HepG2 (cell line): ENCODE measurements at regions of chr10 and their contacts with region 1.

Region 1: DNA sequence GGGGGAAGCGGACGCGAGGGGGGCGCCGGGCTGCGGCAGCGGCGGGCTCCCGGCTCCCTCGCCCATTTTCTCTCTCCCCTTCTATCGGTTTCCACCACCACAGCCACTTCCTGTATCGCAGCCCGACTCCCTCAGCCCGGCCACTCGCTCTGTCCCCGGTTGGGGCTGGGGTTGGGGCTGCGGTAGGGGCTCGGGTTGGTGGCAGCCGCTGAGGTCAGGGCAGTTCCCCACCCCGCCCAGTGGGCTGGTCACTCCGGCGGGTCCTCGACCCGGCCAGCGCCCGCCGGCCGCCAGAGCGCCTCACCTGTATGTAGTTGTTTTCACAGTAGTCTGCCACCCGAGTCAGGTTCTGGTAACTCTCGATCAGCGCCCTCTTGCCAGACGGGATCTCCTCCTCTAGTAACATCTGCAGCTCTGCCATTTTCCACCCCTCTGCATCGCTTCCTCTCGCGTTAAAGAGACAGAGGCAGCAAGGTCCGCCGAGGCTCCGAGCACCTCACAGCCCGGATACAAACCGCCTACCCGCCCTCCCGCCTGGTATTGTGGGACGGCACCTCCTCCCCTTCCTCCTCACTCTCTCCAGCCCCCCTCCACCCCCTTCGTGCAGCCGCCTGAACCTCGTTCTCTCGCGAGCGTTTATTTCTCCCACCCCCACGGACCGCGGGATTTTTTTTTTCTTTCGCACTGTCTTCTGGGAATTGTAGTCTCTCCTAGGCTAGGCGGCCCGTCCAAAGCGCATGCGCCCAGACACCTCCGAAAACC is at the start of gene ABI1:
- DNase-seq: peak; percentile 98
- ATAC-seq: peak; percentile 95
- H3K4me3 ChIP-seq: peak within 1 kb of the TSS; percentile 75 to 100 (median 95)
- H3K27ac ChIP-seq: peak within 1 kb of the TSS; percentile 93
- H3K4me1 ChIP-seq: peaks cover 31% of the 10 kb centered on the region
- H3K27me3 ChIP-seq: peaks cover 0 to 7% of the 10 kb centered on the region in 2 experiments; a peak in 1 of 5 replicates
- CTCF ChIP-seq: no peak
- EP300 ChIP-seq: 0 out of 4 replicates have a peak, but pooled peaks of 1 of the 2 experiments have one; percentile 33
- POLR2A ChIP-seq: peak; percentile 93 to 94
- RAD21 ChIP-seq: no peak
- total RNA-seq, gene ABI1: 22.9 and 29.3 TPM in 2 replicates

Region 2: DNA sequence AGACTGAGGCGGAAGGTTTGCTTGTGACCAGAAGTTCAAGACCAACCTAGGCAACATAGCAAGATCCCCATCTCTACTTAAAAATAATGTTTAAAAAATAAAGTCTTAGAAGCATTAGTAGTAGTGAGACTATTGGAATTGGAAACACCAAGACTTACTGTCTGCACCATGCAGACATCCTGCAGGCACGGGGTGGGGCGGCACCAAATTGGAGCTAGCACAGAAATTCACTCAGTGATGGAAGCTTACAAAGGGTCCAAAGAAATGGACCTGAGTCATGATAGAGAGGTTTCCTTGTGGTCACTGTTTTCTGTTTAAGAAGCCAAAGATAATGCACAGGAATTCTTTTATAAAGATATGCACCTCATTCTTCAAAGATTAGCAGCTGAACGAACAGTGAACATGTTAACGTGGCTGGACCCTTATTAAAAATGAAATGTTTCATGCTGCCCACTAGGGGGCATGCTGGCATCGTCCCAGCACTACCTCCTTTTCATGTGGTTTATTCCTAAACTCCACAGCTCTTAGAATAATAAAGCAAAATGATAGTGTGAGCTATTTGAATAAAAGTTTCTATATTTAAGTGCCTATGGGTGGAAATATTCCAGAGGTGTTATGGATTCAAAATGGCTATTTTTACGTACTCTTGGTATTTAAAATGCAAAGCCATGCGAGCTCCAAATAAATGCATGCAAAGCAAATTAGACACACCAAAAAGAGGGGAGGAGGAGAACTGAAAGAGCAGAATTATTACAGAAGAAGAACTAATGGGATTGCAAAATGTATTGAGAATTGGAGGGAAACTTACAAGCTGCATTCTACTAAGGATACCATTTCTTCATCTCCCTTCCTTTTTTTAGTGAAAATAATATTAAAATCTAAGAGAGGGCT is 134.5 kb before region 1 on chr10:
- CTCF ChIA-PET with region 1: interaction called, 4 read pairs
- POLR2A ChIA-PET with region 1: interaction called, 3 read pairs
- in situ Hi-C with region 1: no loop called
- intact Hi-C with region 1: loop called (anchors 1 kb)
- DNase-seq: peak; percentile 27
- ATAC-seq: peak; percentile 77
- H3K4me3 ChIP-seq: no peak overlapping the region
- H3K27ac ChIP-seq: no peak overlapping the region
- H3K4me1 ChIP-seq: no peaks in the 10 kb centered on the region
- H3K27me3 ChIP-seq: no peaks in the 10 kb centered on the region
- CTCF ChIP-seq: peak; percentile 83
- EP300 ChIP-seq: no peak
- POLR2A ChIP-seq: no peak
- RAD21 ChIP-seq: peak; percentile 76

Region 3: GRCh38 chr10:26733750-26734568 is 126.7 kb before region 1 on chr10:
- CTCF ChIA-PET with region 1: no interaction called
- POLR2A ChIA-PET with region 1: interaction called, 4 read pairs
- in situ Hi-C with region 1: no loop called
- intact Hi-C with region 1: loop called (anchors 2 kb)
- DNase-seq: peak; percentile 97
- ATAC-seq: peak; percentile 98
- H3K4me3 ChIP-seq: peak overlapping the region in 2 of 3 experiments; percentile 27 to 43; a peak in 2 of 6 replicates
- H3K27ac ChIP-seq: peak overlapping the region; percentile 93
- H3K4me1 ChIP-seq: peaks cover 52% of the 10 kb centered on the region
- H3K27me3 ChIP-seq: no peaks in the 10 kb centered on the region
- CTCF ChIP-seq: peak; percentile 40
- EP300 ChIP-seq: peak; percentile 58 to 77; a peak in 3 of 4 replicates
- POLR2A ChIP-seq: peak; percentile 45 to 48; a peak in 3 of 4 replicates
- RAD21 ChIP-seq: peak; percentile 56; the same call in 1 of the 2 replicates

Region 4: GRCh38 chr10:26903431-26904217 is 43.0 kb after region 1 on chr10:
- CTCF ChIA-PET with region 1: no interaction called
- POLR2A ChIA-PET with region 1: no interaction called
- in situ Hi-C with region 1: no loop called
- intact Hi-C with region 1: no loop called
- DNase-seq: no peak
- ATAC-seq: no peak
- H3K4me3 ChIP-seq: no peak overlapping the region
- H3K27ac ChIP-seq: no peak overlapping the region
- H3K4me1 ChIP-seq: no peaks in the 10 kb centered on the region
- H3K27me3 ChIP-seq: no peaks in the 10 kb centered on the region; a peak in 1 of 5 replicates
- CTCF ChIP-seq: no peak
- EP300 ChIP-seq: no peak
- POLR2A ChIP-seq: no peak
- RAD21 ChIP-seq: no peak